ENCODE measurements at regions of chr10 and their contacts with region 1.

Region 1: DNA sequence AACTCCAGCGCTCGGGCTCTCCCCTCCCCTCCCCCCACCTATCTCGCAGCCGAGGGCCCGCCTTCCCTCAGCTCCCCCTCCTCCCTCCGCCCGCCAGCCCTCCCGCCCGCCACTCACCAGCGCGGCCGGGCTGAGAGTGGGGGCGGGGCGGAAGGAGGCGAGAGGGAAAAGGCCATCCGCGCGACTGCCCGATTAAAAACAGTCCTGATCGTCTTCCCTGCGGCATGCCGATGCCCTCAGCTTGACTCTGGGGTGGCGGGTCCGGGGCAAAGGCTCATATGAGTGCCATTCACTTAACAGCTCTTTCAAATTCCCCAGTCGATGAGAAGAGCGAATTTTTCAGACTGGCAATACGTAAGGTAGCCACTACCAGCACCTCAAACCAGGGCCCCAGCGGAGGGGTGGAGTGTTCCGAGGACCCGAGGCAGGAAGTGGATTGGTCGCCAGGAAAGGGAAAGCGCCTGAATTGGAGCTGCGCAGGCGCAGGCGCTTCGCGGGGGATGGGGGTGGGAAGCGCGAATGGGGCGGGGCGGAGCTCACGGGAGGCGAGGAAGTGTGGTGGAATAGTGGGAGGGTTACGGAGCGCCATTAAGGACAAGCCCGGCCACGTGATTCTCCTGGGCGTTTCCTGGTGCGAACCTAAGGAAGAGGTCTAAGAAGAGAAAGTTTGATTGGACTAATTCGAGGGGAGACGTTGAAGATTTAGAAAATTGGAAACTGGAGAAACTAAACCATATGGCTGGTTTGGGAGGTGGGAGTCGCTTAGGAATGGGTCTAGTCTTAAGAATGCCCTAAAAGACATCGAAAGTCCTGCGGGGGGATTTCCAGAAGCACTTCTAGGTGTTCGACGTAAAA is at the start of gene UPF2:
- DNase-seq: peak; percentile 98
- H3K4me3 ChIP-seq: peak within 1 kb of the TSS; percentile 95
- H3K27ac ChIP-seq: peak within 1 kb of the TSS; percentile 99
- H3K27me3 ChIP-seq: no peaks in the 10 kb centered on the region
- CTCF ChIP-seq: no peak
- polyA plus RNA-seq, gene UPF2: 12.3 and 18.4 TPM in 2 replicates

Region 2: GRCh38 chr10:11684717-11685645 is 358.0 kb before region 1 on chr10:
- CTCF ChIA-PET with region 1: no interaction called
- POLR2A ChIA-PET with region 1: no interaction called
- DNase-seq: peak; percentile 41
- H3K4me3 ChIP-seq: peak overlapping the region; percentile 50
- H3K27ac ChIP-seq: peak overlapping the region; percentile 76
- H3K27me3 ChIP-seq: peaks cover 6% of the 10 kb centered on the region
- CTCF ChIP-seq: no peak

Region 3: DNA sequence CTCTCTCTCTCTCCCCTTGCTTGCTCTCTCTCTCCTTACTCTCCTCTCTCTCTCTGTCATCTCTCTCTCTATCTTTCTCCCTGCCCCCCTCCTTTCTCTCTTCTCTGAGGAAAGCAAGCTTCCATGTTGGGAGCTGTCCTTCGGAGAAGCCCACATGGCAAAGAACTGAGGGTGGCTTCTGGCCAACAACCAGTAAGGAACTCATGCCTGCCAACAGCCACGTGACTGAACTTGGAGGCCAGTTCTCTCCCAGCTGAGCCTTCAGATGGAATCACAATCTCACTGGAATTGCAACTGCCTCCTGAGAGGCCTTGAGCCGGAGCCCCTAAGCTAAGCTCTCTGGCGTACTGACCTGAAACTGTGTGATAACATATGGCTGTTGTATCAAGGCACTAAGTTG is 13.7 kb after region 1 on chr10:
- CTCF ChIA-PET with region 1: no interaction called
- POLR2A ChIA-PET with region 1: no interaction called
- DNase-seq: no peak
- H3K4me3 ChIP-seq: no peak overlapping the region
- H3K27ac ChIP-seq: no peak overlapping the region
- H3K27me3 ChIP-seq: no peaks in the 10 kb centered on the region
- CTCF ChIP-seq: no peak

Region 4: DNA sequence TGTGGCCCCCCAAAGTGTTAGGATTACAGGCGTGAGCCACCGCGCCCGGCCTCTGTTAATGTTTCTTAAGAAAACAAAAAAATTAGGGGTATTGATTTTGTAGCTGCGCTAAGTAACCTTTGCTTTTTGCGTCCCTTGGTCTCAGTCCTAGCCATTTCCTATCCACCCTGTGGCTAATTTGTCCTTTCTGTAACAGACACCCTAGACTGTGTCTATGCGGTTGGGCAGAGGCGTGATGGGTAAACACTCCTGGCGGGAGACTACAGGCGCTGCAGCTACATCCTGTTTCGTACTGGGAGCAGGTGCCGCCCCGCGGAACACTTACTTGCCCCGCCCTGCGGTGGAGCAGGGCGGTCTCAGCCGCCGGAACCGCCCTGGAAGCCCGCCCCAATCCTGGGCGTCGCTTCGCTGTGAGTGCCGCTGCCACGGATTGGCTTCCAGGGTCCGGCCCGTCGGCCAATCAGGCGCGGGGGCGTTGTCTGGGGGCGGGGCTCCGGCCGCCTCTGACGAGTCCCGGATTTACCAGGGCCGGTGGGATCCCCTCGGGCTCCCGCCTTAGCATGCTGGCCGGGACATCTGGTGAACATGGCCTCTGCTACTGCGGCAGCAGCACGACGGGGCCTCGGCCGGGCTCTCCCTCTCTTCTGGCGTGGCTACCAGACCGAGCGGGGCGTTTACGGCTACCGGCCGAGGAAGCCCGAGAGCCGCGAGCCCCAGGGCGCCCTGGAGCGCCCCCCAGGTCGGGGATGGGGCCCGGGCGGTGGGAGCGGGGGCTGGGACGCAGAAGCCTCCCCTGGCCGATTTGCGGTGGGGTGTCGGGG is 25.6 kb after region 1 on chr10 and contains the start of gene DHTKD1:
- CTCF ChIA-PET with region 1: interaction called, 4 read pairs
- POLR2A ChIA-PET with region 1: interaction called, 15 read pairs
- DNase-seq: peak; percentile 88
- H3K4me3 ChIP-seq: peak within 1 kb of the TSS; percentile 87
- H3K27ac ChIP-seq: peak within 1 kb of the TSS; percentile 61
- H3K27me3 ChIP-seq: no peaks in the 10 kb centered on the region
- CTCF ChIP-seq: peak; percentile 40
- polyA plus RNA-seq, gene DHTKD1: 17.5 and 21.5 TPM in 2 replicates